ENCODE measurements at regions of chr12 and their contacts with region 1.

Region 1: DNA sequence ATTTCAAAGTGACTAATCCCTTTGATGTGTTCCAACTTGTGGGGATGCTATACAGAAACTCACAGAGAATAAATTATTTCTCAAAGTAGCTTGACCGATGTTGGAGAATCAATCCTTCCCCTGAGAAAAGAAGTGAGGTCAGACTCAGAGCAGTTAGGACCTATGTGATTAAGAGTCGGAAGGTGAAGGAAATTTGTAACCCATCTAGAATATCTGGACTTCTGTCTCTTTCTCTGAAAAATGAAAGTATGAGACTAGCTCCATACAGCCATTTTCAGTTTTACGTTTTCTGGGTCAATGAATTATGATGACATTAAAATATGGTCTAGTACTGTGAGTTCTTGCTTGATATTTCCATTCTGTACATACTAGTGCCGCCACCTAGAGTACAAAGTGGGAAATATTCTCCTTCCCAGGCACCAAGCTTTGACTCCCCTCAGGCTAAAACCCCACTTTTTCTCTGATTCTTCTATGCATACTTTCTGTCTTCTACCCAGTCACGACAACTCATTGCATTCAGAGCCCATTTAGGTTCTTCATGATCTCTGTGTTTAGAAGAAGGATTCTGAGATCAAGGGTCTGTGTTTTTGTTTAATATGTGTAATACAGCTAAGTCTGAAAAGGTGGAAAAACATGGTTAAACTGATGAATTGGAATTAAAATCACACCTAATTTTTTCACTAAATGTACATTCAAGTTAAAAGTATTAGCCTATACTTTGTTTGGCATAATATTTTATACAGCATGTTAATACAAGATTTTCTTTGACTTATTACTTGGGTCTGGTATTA is 6.9 kb upstream of the NTS start:
- DNase-seq: peak; percentile 27 to 37
- H3K4me3 ChIP-seq: no peak overlapping the region
- H3K27ac ChIP-seq: no peak overlapping the region
- H3K4me1 ChIP-seq: no peaks in the 10 kb centered on the region
- H3K27me3 ChIP-seq: no peaks in the 10 kb centered on the region
- CTCF ChIP-seq: peak; percentile 87

Region 2: GRCh38 chr12:85468356-85469157 is 398.6 kb before region 1 on chr12:
- CTCF ChIA-PET with region 1: no interaction called
- POLR2A ChIA-PET with region 1: no interaction called
- intact Hi-C with region 1: loop called (anchors 1 kb)
- DNase-seq: peak; percentile 52 to 68
- H3K4me3 ChIP-seq: peak overlapping the region; percentile 43; the same call in 1 of the 2 replicates
- H3K27ac ChIP-seq: 0 out of 2 replicates have a peak overlapping the region, but pooled peaks have one; percentile 1
- H3K4me1 ChIP-seq: peaks cover 27% of the 10 kb centered on the region
- H3K27me3 ChIP-seq: no peaks in the 10 kb centered on the region
- CTCF ChIP-seq: peak; percentile 87

Region 3: GRCh38 chr12:85575120-85576096 is 291.8 kb before region 1 on chr12:
- CTCF ChIA-PET with region 1: interaction called, 10 read pairs
- POLR2A ChIA-PET with region 1: no interaction called
- intact Hi-C with region 1: loop called (anchors 1 kb)
- DNase-seq: peak; percentile 33 to 40
- H3K4me3 ChIP-seq: no peak overlapping the region
- H3K27ac ChIP-seq: no peak overlapping the region
- H3K4me1 ChIP-seq: no peaks in the 10 kb centered on the region
- H3K27me3 ChIP-seq: no peaks in the 10 kb centered on the region
- CTCF ChIP-seq: peak; percentile 74

Region 4: DNA sequence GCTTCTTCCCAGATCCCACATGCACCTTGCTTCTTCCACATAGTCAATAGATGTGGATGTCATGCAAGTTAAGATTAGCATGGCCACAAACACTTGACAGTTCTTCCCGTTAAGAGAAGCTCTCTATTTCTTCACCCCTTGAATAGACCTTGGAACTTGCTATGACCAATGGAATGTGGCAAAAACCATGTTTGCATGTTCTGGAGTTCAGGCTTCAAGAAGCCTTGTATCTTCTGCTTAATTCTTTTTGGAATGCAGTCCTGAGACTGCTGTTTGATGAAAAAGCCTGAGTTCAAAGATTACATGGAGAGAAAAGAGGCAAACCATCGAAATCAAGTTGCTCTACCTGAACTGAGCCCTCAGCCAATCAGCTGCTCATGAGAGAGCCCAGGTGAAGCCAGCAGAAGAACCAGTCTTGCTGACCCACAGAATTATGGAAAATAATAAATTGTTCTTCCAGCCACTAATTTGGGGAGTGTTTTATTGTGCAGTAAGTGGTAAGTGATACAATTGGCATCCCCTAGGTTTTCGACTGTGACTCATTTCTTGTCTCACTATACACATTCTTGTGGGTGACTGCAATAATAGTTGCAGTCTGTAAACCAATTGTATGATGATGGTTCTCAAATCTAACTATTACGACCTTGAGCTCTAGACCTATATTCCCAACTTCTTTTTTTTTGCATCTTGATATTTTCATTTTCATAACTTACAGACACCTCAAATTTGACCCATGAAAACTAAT is 43.6 kb before region 1 on chr12:
- CTCF ChIA-PET with region 1: interaction called, 3 read pairs
- POLR2A ChIA-PET with region 1: interaction called, 6 read pairs
- intact Hi-C with region 1: loop called (anchors 5 kb)
- DNase-seq: peak in 1 of 2 experiments; percentile 67
- H3K4me3 ChIP-seq: no peak overlapping the region
- H3K27ac ChIP-seq: no peak overlapping the region
- H3K4me1 ChIP-seq: peaks cover 30% of the 10 kb centered on the region
- H3K27me3 ChIP-seq: no peaks in the 10 kb centered on the region
- CTCF ChIP-seq: no peak

Region 5: GRCh38 chr12:85836197-85837090 is 30.7 kb before region 1 on chr12 and contains the start of gene RASSF9:
- CTCF ChIA-PET with region 1: no interaction called
- POLR2A ChIA-PET with region 1: interaction called, 11 read pairs
- intact Hi-C with region 1: no loop called
- DNase-seq: peak in 1 of 2 experiments; percentile 59
- H3K4me3 ChIP-seq: no peak within 1 kb of the TSS
- H3K27ac ChIP-seq: no peak within 1 kb of the TSS
- H3K4me1 ChIP-seq: no peaks in the 10 kb centered on the region
- H3K27me3 ChIP-seq: no peaks in the 10 kb centered on the region
- CTCF ChIP-seq: no peak
- total RNA-seq, gene RASSF9: 0.46 and 0.95 TPM in 2 replicates

Measured in PC-9 (cell line).